Ascending aorta (tissue), 2 donors: ENCODE measurements at regions of chrX and their contacts with region 1.

Region 1: DNA sequence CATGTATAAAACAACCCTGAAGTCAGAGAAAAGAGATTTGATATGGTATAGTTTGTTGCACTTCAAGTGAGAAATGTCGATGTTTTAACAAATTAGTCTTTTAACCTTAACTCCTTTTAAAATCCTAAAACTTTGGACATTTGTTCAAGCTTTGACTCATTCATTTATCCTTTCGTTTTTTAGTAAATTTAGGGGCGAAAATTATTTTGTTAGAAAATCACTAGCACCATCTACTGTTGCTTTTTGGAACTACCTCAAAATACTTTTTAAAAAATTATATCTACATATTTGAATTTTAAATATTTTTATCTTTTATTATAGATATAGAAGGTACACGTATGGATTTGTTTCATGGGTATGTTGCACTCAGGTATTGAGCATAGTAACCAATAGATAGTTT is 165.1 kb upstream of the POF1B start:
- DNase-seq: no peak
- H3K4me3 ChIP-seq: no peak overlapping the region
- H3K27ac ChIP-seq: peak overlapping the region in 1 of 2 donors; percentile 19
- H3K4me1 ChIP-seq: no peaks in the 10 kb centered on the region
- H3K27me3 ChIP-seq: no peaks in the 10 kb centered on the region
- CTCF ChIP-seq: peak; percentile 6 to 50 (median 36)

Region 2: GRCh38 chrX:85084770-85085393 is 459.7 kb before region 1 on chrX:
- intact Hi-C with region 1: loop called (anchors 10 kb)
- DNase-seq: no peak
- H3K4me3 ChIP-seq: no peak overlapping the region
- H3K27ac ChIP-seq: no peak overlapping the region
- H3K4me1 ChIP-seq: no peaks in the 10 kb centered on the region
- H3K27me3 ChIP-seq: no peaks in the 10 kb centered on the region
- CTCF ChIP-seq: peak; percentile 34 to 77 (median 72)

Region 3: DNA sequence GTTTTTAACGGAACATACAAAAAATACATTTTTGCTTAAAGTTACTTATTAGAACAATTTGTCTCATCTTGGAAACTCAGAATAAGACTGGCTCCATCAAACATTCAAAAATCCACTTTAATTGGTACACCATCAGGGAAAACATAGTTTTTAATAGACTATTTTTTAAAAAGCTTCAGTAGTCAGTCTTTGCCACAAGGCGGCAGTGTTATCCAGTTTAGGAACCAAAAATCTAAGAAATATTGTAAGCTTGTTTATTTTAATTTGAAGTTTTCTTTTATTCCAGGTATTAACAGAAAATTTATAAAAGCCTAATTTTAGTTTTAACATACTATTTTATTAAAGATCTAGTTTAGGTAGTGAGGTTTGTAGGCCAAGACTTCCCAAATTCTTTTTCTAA is 433.3 kb before region 1 on chrX:
- intact Hi-C with region 1: loop called (anchors 5 kb)
- DNase-seq: no peak
- H3K4me3 ChIP-seq: no peak overlapping the region
- H3K27ac ChIP-seq: no peak overlapping the region
- H3K4me1 ChIP-seq: no peaks in the 10 kb centered on the region
- H3K27me3 ChIP-seq: no peaks in the 10 kb centered on the region
- CTCF ChIP-seq: peak in 2 of 3 experiments; percentile 54 to 65

Region 4: DNA sequence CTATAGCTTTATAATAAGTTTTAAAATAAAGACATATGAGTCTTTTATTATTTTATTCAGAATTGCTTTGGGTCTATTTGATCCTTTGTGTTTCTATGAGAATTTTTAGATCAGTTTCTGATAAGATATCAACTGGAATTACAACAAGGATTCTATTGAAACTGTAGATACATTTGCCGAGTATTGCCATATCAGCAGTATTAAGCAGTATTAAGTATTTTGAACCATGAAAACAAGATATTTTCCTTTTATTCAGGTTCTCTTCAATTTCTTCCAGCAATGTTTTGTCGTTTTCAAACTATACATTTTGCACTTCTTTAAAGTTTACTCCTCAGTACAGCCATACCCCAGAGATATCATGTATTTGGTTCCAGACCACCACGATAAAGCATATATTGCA is 1202.5 kb after region 1 on chrX:
- intact Hi-C with region 1: no loop called
- DNase-seq: no peak
- H3K4me3 ChIP-seq: no peak overlapping the region
- H3K27ac ChIP-seq: no peak overlapping the region
- H3K4me1 ChIP-seq: no peaks in the 10 kb centered on the region
- H3K27me3 ChIP-seq: no peaks in the 10 kb centered on the region
- CTCF ChIP-seq: no peak